Activated CD4-positive, alpha-beta T cell treated with anti-CD3 and anti-CD28 coated beads for 36 hours (primary cell): ENCODE measurements at regions of chr10 and their contacts with region 1.

Region 1: DNA sequence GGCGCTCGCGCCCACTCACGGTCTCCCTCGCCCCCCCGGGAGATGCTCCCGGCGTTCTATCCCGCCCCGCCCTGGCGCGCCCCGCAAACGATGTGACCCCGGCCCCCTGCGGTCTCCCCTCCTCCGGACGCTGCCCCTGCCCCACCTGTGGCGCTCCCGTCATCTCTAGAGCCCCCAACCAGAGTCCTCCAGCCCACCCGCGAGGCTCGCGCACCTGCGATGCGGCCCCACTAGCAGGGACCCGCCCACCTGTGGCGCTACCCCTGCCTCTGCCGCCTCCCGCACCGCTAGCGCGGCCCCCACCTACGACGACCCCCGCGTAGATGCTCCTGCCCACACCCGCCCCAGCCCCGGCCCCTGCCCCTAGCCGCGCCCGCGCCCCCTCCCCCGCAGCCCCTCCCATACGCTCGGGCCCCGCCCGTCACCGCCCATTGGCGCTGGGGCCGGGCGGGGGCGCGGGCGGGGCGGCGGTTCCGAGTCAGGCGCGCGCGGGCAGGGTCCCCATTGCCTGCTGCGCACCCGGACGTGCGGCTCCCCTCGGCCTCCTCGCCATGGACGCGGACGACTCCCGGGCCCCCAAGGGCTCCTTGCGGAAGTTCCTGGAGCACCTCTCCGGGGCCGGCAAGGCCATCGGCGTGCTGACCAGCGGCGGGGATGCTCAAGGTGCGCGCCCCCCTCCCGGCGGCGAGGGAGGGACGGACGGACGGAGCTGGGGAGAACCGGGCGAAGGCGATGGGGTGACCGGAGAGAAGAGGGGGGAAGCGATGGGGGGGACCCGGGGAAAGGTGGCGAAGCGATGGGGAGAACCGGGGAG is at the start of gene PFKP:
- DNase-seq: peak; percentile 83
- ATAC-seq: peak; percentile 66
- H3K4me3 Mint-ChIP-seq: peak within 1 kb of the TSS; percentile 83
- H3K27ac Mint-ChIP-seq: peak within 1 kb of the TSS; percentile 89
- H3K4me1 Mint-ChIP-seq: peaks cover 31% of the 10 kb centered on the region
- H3K27me3 Mint-ChIP-seq: peaks cover 5% of the 10 kb centered on the region
- total RNA-seq, gene PFKP: 231 to 239 TPM

Region 2: DNA sequence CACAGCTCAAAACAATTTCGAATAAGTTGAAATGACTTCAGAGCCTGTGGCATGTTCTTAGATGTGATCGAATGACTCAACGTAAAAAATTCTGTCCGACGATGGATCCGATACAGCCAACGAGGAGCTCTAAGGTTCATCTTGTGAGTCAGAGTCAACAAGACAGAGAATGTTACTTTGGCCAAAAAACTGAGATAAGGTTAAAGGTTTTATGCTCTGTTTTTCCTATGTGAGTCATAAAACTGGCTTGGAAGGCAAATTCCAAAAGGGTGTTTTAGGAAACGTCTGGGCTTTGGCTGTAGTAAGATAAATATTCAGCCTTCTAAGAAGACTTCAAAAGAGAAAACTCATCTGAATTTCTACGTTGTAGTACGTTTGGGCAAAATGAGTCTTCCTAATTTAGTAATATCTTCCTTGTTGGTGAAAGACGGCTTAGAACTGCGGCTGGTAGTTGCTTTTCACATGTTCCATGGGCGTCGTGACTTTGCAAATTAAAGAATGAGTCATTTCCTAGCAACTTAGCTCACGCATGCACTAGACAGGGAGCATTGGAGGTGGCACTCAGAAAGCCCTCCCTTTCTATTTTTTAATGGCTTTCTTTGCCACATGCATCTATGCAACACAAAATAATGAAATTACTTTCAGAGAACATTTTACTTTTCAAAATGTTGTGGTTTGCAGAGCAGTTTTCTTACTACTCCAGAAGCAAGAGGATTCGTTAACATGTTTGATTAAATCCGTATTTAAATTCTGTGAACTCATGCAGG is 28.3 kb after region 1 on chr10:
- CTCF ChIA-PET with region 1: interaction called, 3 read pairs
- POLR2A ChIA-PET with region 1: interaction called, 8 read pairs
- intact Hi-C with region 1: loop called (anchors 1 kb)
- DNase-seq: peak; percentile 80
- ATAC-seq: peak; percentile 86
- H3K4me3 Mint-ChIP-seq: peak overlapping the region; percentile 15
- H3K27ac Mint-ChIP-seq: peak overlapping the region; percentile 83
- H3K4me1 Mint-ChIP-seq: peaks cover 55% of the 10 kb centered on the region
- H3K27me3 Mint-ChIP-seq: no peaks in the 10 kb centered on the region